Endothelial cell of umbilical vein (primary cell): ENCODE measurements at regions of chr20 and their contacts with region 1.

Region 1: GRCh38 chr20:2005831-2006426 is 12.1 kb upstream of the PDYN start:
- DNase-seq: peak; percentile 46
- H3K4me3 ChIP-seq: no peak overlapping the region
- H3K27ac ChIP-seq: no peak overlapping the region
- H3K4me1 ChIP-seq: no peaks in the 10 kb centered on the region
- H3K27me3 ChIP-seq: peaks cover 0 to 4% of the 10 kb centered on the region in 2 experiments
- CTCF ChIP-seq: peak in 1 of 2 donors; percentile 3
- POLR2A ChIP-seq: no peak

Region 2: DNA sequence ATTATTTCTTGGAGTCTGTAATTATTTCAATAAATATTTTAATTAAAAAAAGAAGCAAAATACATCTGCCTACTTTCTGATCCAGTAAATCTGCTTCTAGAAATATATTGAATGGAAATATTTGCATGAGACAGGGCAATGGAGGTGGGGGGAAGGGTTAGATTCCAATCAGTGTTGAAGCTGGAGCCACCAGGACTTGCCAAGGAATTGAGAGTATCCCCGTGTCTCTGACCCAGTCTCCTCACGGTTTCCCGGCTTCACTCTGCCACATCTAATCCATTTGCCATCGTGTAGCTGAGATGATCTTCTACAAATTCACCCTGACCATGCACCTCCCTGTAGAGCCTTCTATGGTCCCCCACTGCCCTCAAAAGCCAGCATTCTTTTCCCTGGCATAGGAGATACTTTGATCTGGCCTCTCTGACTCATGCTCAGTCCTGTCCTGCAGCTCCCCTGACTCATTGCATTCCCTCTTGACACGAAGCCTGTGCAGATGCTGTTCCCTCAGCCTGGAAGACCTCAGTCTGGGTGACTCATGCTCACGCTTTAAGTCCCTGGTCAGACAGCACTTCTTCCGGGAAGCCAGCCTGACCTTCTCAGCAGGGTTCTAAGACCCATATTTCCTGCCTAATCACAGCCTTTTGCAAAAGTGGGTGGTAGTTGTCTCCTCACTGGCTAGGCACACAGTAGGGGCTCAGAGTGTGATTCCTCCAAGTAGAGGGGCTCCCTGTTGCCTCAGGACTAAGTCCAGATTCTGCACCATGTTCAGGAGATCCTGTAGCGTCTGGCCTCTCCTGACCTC is 590.1 kb before region 1 on chr20:
- CTCF ChIA-PET with region 1: no interaction called
- POLR2A ChIA-PET with region 1: no interaction called
- dilution Hi-C with region 1: no loop called
- intact Hi-C with region 1: no loop called
- DNase-seq: peak; percentile 80
- H3K4me3 ChIP-seq: no peak overlapping the region
- H3K27ac ChIP-seq: peak overlapping the region; percentile 63
- H3K4me1 ChIP-seq: peaks cover 31% of the 10 kb centered on the region
- H3K27me3 ChIP-seq: no peaks in the 10 kb centered on the region
- CTCF ChIP-seq: no peak
- POLR2A ChIP-seq: no peak

Region 3: DNA sequence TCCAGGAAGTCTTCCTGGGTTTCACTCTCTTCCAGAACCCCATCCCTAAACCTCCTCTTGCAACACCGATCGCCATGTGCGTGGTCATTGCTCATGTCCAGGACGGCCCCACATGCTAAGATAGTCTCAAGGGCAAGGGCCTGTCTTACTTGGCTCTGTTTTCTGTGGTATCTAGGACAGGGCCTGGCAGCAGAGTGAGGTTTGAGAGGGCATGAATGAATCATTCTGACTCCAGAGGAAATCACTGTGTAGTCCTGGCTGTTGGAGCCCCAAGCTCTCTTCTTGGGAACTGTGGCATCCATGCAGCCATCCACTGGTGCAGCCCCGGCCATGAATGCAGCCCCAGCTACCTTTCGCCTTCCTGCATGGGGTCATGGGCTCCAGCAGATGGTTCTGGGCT is 98.3 kb before region 1 on chr20:
- CTCF ChIA-PET with region 1: no interaction called
- POLR2A ChIA-PET with region 1: no interaction called
- dilution Hi-C with region 1: no loop called
- intact Hi-C with region 1: no loop called
- DNase-seq: no peak
- H3K4me3 ChIP-seq: no peak overlapping the region
- H3K27ac ChIP-seq: no peak overlapping the region
- H3K4me1 ChIP-seq: no peaks in the 10 kb centered on the region
- H3K27me3 ChIP-seq: no peaks in the 10 kb centered on the region
- CTCF ChIP-seq: no peak
- POLR2A ChIP-seq: no peak

Region 4: DNA sequence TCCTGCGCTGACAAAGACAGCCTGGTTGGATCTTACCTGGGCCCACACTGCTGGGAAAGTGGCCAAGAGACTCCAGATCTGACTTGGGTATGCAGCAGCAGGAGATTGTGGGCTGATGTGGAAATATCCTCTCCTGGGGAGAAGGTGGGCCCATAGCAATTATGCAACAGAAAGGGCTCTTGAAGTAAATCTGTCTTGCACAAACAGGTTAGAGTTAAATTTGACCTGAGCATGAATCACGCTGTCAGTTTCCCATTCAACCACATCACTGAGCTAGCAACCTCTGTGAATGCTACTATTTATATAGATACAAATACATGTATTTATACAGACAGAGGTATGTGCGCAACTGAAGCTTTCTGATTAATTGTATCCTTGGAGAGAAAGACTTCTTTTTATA is 16.2 kb after region 1 on chr20:
- CTCF ChIA-PET with region 1: interaction called, 30 read pairs
- POLR2A ChIA-PET with region 1: no interaction called
- dilution Hi-C with region 1: no loop called
- intact Hi-C with region 1: no loop called
- DNase-seq: no peak
- H3K4me3 ChIP-seq: no peak overlapping the region
- H3K27ac ChIP-seq: no peak overlapping the region
- H3K4me1 ChIP-seq: no peaks in the 10 kb centered on the region
- H3K27me3 ChIP-seq: peaks cover 0 to 8% of the 10 kb centered on the region in 2 experiments
- CTCF ChIP-seq: no peak
- POLR2A ChIP-seq: no peak

Region 5: DNA sequence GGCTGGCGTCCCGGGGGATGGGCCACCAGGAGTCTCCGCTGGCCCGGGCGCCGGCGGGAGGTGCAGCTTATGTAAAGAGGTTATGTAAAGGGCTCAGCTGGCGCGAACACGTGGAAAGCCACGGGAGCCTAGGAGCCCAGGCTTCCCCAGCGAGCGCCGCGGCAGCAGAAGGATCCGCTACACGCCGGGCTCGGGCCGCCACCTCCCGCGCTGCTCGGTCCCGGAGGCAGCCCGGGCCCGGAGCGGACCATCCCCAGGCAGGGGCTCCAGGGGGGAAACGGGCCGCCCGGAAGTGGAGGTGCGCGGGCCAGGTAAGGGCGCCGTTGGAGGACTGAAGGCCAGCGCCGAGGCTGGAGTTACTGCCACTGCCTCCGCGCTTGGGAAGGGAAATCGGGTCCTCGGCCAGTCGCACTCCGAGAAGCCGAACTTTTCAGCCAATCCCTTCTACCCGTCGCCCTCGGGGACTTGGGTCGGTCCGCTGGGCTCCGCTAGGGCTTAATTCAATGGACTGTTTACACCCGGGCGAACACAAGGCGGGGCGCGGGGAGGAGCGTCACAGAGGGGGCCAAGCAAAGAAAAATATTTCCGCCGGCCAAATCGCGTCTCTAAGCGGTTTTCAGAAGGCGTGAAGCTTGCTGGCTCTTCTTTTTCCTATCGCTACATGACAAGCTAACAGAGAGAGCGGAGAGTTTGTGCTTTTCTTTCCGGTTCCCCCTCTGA is 96.1 kb after region 1 on chr20:
- CTCF ChIA-PET with region 1: interaction called, 6 read pairs
- POLR2A ChIA-PET with region 1: no interaction called
- dilution Hi-C with region 1: no loop called
- intact Hi-C with region 1: loop called (anchors 1 kb)
- DNase-seq: peak; percentile 90
- H3K4me3 ChIP-seq: peak overlapping the region; percentile 49 to 77 (median 65)
- H3K27ac ChIP-seq: peak overlapping the region; percentile 98
- H3K4me1 ChIP-seq: peaks cover 16% of the 10 kb centered on the region
- H3K27me3 ChIP-seq: peaks cover 0 to 2% of the 10 kb centered on the region in 2 experiments
- CTCF ChIP-seq: no peak
- POLR2A ChIP-seq: peak; percentile 75